ENCODE measurements at regions of chr11 and their contacts with region 1.

Region 1: GRCh38 chr11:125164422-125165110 is at the start of gene PKNOX2:
- DNase-seq: peak; percentile 68 to 97 (median 84)

Region 2: DNA sequence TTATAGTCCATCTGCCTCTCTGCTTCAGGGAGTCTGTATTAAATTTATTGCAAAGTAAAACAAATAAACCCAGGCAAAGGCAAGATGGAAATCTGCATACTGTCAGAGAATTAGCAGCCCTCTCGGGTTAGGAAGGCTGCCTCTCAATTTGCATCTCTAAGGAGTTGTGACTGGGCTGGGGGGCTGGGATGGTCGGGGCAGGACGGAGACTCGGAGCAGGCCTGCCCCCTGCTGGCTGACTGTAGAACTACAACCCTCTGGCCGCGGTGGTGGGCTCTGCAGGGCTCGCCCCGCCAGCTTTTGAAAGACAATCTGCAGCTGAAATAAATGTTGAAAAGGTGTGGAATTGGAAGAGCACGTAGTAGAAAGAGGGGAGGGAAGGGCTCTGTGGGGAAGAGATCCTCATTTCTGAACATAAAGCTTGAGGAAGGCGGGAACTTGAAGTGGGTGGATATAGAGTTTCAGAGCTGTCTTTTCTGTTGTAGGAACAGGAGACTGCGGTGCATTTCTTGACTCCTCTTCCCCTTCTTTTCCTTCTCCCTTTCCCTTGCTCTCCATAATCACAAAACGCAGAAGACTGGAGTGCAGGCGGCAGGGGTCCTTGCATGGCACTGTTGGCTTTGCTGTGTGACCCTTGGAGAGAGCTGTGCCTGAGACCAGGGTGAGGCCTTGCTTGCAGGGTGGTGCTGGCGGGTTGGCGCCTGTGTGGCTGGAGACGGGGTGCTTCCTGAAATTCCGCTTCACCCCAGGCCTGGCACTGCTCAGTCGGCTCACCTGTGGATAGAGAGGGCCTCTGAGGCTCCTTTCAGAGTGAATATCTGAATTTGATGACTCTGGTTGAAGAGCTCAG is 22.7 kb before region 1 on chr11:
- intact Hi-C with region 1: no loop called
- DNase-seq: peak in 8 of 10 donors; percentile 38 to 91 (median 58)

Region 3: DNA sequence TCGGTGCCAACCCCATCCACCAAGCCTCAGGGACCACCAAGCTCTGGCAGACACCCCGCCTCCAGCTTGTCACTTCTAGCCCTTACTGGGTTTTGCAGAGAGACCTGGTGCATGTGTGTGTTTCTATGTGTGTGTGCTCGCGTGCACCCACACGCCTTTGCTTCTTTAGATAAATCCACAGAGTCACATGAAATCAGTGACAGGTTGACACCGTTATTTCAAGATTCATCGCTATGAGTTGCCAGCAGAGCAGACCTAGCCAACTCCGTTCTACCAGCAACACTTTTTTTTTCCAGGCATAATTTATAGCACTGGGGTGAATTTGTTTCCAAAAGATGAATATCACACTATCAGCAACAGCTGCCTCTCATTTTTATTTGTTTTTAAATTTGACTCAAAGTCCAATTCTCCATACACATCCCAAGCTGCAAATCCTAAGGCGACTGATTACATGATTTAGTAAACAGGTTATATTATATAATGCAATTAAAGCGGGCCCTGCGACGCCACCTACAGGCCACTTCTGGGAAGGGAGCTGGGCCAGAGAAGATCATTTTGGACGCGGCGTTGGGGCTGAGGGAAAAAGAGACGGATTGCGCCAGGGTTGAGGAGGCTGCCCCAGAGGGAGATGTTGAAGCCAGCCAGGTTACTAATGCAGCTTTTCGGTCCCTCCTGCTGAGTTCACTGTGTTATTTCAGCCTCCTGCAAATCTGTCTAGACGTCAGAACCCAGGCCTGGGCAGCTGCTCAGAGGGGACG is 181.0 kb after region 1 on chr11:
- intact Hi-C with region 1: loop called (anchors 1 kb)
- DNase-seq: peak; percentile 62 to 93 (median 76)

Region 4: GRCh38 chr11:125443767-125444311 is 279.3 kb after region 1 on chr11:
- intact Hi-C with region 1: no loop called
- DNase-seq: peak in 1 of 10 donors; percentile 40